CD4-positive, alpha-beta memory T cell (primary cell): ENCODE measurements at regions of chr4 and their contacts with region 1.

Region 1: DNA sequence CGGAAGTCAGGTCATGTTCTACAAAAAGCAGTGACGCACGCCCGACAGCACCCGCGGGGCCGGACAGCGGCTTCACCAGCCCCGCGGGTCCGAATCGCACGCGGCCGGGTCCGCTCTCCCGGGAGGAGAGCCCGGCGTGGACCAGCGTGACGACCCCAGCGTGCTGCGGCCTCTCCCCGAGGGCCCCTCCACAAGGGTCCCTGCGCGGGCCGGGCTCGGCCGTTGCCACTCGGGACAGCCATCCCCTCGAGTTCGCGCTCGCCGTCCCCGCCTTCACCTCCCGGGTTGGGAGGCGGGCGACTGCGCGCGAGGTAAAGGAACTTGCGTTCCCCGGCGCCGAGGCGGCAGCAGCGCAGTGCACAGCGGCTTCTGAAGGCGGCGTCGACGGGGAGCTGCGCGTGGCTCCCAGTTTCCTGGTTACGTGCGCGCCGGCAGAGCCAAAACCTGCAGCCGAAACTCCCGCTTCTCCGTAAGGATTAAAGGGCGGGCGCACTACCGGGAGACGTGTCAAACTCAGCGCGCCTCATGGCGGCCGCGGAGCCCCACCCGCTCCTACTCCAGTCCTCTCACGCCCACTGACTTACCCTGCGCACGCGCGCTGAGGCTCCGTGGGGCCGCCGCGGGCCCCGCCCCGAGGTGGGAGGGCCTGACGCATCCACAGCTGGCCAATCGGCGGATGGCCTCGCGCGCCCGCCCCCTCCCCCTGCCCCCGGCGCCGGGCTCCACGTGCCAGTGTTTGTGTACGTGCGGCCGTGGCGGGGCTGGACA is 416 bp upstream of the LRP2BP start:
- DNase-seq: peak; percentile 95 to 98 (median 97)
- H3K4me3 ChIP-seq: peak overlapping the region; percentile 91 to 99
- H3K4me3 Mint-ChIP-seq: peak overlapping the region; percentile 88 to 99 (median 95)
- H3K27ac ChIP-seq: peak overlapping the region; percentile 99
- H3K27ac Mint-ChIP-seq: peak overlapping the region; percentile 92 to 100 (median 99)
- H3K4me1 ChIP-seq: peaks cover 18% of the 10 kb centered on the region
- H3K4me1 Mint-ChIP-seq: peaks cover 11 to 24% (median 18%) of the 10 kb centered on the region in 4 donors
- H3K27me3 ChIP-seq: no peaks in the 10 kb centered on the region
- H3K27me3 Mint-ChIP-seq: no peaks in the 10 kb centered on the region

Region 2: GRCh38 chr4:183659029-183659871 is 1736.9 kb before region 1 on chr4 and contains the starts of genes RWDD4 and TRAPPC11:
- CTCF ChIA-PET with region 1: no interaction called
- POLR2A ChIA-PET with region 1: no interaction called
- intact Hi-C with region 1: loop called (anchors 5 kb)
- DNase-seq: peak; percentile 95 to 98 (median 96)
- H3K4me3 ChIP-seq: peak within 1 kb of the TSS; percentile 89 to 91
- H3K4me3 Mint-ChIP-seq: peak within 1 kb of the TSS; percentile 91 to 98 (median 94)
- H3K27ac ChIP-seq: peak within 1 kb of the TSS; percentile 93
- H3K27ac Mint-ChIP-seq: peak within 1 kb of the TSS; percentile 75 to 99 (median 97)
- H3K4me1 ChIP-seq: peaks cover 37% of the 10 kb centered on the region
- H3K4me1 Mint-ChIP-seq: peaks cover 25 to 54% (median 41%) of the 10 kb centered on the region in 4 donors
- H3K27me3 ChIP-seq: no peaks in the 10 kb centered on the region
- H3K27me3 Mint-ChIP-seq: no peaks in the 10 kb centered on the region
- total RNA-seq, gene RWDD4: 12.0 to 13.8 TPM
- total RNA-seq, gene TRAPPC11: 42.2 to 51.0 TPM

Region 3: DNA sequence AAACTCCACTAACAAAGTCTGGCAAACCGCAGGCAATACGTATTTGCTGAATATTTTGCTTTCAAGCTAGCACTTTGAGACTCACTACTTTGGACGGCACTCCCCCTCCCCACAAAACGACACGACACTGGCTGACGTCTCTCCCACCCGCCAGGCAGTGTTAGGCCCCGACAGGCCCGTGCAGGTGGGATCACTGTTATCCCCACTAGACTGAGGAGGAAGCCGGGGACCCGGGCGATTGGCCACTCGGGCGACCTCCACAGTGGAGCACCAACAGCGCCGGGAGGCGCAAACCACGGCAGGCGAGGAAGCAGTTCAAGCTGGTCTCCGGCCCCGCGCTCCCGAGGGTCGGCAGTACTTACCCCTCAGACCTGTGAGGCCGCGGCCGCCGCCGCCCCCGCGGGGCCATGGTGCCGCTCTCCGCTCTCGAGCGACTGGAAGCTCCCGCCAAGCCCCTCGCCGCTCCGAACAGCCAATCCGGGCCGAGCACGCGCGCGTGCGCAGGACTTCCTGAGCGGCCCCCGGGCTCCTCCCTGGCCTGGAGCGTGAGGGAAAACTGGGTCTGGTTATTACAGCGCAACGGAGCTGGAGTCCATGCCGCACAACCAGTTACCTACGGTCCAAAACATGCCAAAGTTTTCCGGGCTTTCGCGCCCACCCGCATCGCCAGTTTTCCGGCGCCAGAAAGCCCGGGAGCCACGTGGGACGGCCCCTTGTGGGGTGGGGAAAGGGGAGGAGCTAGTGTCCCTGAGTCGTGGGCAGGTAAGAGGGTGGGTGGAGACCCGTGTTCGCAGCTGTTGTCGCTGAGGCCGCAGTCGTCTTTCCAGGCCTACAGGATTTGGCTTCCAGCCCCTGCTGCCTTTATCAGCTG is 662.3 kb before region 1 on chr4 and contains the start of gene CENPU:
- CTCF ChIA-PET with region 1: no interaction called
- POLR2A ChIA-PET with region 1: interaction called, 4 read pairs
- intact Hi-C with region 1: loop called (anchors 5 kb)
- DNase-seq: peak; percentile 93 to 95 (median 94)
- H3K4me3 ChIP-seq: peak within 1 kb of the TSS; percentile 59 to 81
- H3K4me3 Mint-ChIP-seq: peak within 1 kb of the TSS; percentile 88 to 96 (median 92)
- H3K27ac ChIP-seq: peak within 1 kb of the TSS; percentile 56
- H3K27ac Mint-ChIP-seq: peak within 1 kb of the TSS; percentile 86 to 95 (median 92)
- H3K4me1 ChIP-seq: peaks cover 15% of the 10 kb centered on the region
- H3K4me1 Mint-ChIP-seq: peaks cover 8 to 23% (median 14%) of the 10 kb centered on the region in 4 donors
- H3K27me3 ChIP-seq: no peaks in the 10 kb centered on the region
- H3K27me3 Mint-ChIP-seq: no peaks in the 10 kb centered on the region
- total RNA-seq, gene CENPU: 2.1 to 2.2 TPM

Region 4: GRCh38 chr4:185142912-185143595 is 253.1 kb before region 1 on chr4 and contains the start of gene SLC25A4:
- CTCF ChIA-PET with region 1: no interaction called
- POLR2A ChIA-PET with region 1: interaction called, 14 read pairs
- intact Hi-C with region 1: loop called (anchors 5 kb)
- DNase-seq: peak; percentile 77 to 83 (median 81)
- H3K4me3 ChIP-seq: peak within 1 kb of the TSS; percentile 40 to 57
- H3K4me3 Mint-ChIP-seq: peak within 1 kb of the TSS; percentile 87 to 98 (median 90)
- H3K27ac ChIP-seq: peak within 1 kb of the TSS; percentile 26
- H3K27ac Mint-ChIP-seq: peak within 1 kb of the TSS in 6 of 7 donors; percentile 69 to 89 (median 83)
- H3K4me1 ChIP-seq: peaks cover 15% of the 10 kb centered on the region
- H3K4me1 Mint-ChIP-seq: peaks cover 8 to 24% (median 16%) of the 10 kb centered on the region in 4 donors
- H3K27me3 ChIP-seq: peaks cover 6% of the 10 kb centered on the region
- H3K27me3 Mint-ChIP-seq: peaks cover 8 to 13% of the 10 kb centered on the region in 2 donors
- total RNA-seq, gene SLC25A4: 6.4 to 7.2 TPM

Region 5: GRCh38 chr4:185209031-185209851 is 186.9 kb before region 1 on chr4 and contains the start of gene SNX25:
- CTCF ChIA-PET with region 1: no interaction called
- POLR2A ChIA-PET with region 1: interaction called, 30 read pairs
- intact Hi-C with region 1: loop called (anchors 1 kb)
- DNase-seq: peak; percentile 84 to 88 (median 86)
- H3K4me3 ChIP-seq: peak within 1 kb of the TSS; percentile 57 to 59
- H3K4me3 Mint-ChIP-seq: peak within 1 kb of the TSS; percentile 92 to 96 (median 93)
- H3K27ac ChIP-seq: peak within 1 kb of the TSS; percentile 46
- H3K27ac Mint-ChIP-seq: peak within 1 kb of the TSS; percentile 92 to 98 (median 93)
- H3K4me1 ChIP-seq: peaks cover 44% of the 10 kb centered on the region
- H3K4me1 Mint-ChIP-seq: peaks cover 33 to 62% (median 49%) of the 10 kb centered on the region in 4 donors
- H3K27me3 ChIP-seq: no peaks in the 10 kb centered on the region
- H3K27me3 Mint-ChIP-seq: no peaks in the 10 kb centered on the region
- total RNA-seq, gene SNX25: 23.0 to 24.5 TPM

Region 6: DNA sequence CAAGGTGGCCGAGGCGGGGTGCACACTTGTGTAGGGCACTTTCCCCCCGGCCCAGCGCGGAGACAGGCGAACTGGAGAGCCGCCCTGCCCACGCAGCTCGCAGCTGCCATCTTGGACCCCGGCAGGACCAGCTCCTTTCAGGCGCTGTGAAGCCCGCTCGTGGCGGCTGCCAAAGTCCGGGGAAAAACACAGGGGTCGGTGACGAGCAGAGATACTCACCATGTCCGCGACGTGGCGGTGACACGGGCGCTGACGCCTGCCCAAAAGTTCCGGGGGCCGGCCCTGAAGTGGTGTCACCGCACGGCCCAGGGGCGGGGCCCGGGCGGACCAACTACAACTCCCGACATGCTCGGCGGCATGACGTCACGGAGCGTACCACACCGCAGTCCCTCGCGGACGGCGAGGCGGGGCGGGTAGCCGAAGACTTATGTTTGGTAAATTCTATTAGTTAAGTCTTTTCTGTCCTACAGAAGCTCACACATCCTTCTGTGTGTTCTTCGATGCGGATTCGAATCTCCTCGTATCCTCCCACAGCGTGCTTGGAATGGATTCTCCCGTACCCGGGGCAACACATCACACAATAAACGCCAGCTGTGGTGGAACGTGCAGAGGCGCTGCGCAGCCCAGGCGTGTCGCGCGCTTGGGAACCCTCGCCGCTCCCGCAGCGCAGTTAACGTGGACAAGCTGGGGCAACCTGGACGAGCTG is 29.7 kb after region 1 on chr4 and contains the start of gene UFSP2:
- CTCF ChIA-PET with region 1: interaction called, 10 read pairs
- POLR2A ChIA-PET with region 1: interaction called, 94 read pairs
- intact Hi-C with region 1: loop called (anchors 1 kb)
- DNase-seq: peak; percentile 91 to 96 (median 92)
- H3K4me3 ChIP-seq: peak within 1 kb of the TSS; percentile 45 to 77
- H3K4me3 Mint-ChIP-seq: peak within 1 kb of the TSS; percentile 89 to 98 (median 96)
- H3K27ac ChIP-seq: peak within 1 kb of the TSS; percentile 99
- H3K27ac Mint-ChIP-seq: peak within 1 kb of the TSS; percentile 92 to 100 (median 100)
- H3K4me1 ChIP-seq: peaks cover 24% of the 10 kb centered on the region
- H3K4me1 Mint-ChIP-seq: peaks cover 23 to 46% (median 29%) of the 10 kb centered on the region in 4 donors
- H3K27me3 ChIP-seq: no peaks in the 10 kb centered on the region
- H3K27me3 Mint-ChIP-seq: peaks cover 1 to 2% of the 10 kb centered on the region in 2 donors
- total RNA-seq, gene UFSP2: 30.1 to 30.3 TPM

Region 7: GRCh38 chr4:186191200-186192065 is 795.3 kb after region 1 on chr4 and contains the start of gene CYP4V2:
- CTCF ChIA-PET with region 1: no interaction called
- POLR2A ChIA-PET with region 1: interaction called, 8 read pairs
- intact Hi-C with region 1: loop called (anchors 10 kb)
- DNase-seq: peak; percentile 85 to 93 (median 90)
- H3K4me3 ChIP-seq: peak within 1 kb of the TSS; percentile 79
- H3K4me3 Mint-ChIP-seq: peak within 1 kb of the TSS; percentile 92 to 97 (median 95)
- H3K27ac ChIP-seq: peak within 1 kb of the TSS; percentile 90
- H3K27ac Mint-ChIP-seq: peak within 1 kb of the TSS; percentile 96 to 98 (median 97)
- H3K4me1 ChIP-seq: peaks cover 36% of the 10 kb centered on the region
- H3K4me1 Mint-ChIP-seq: peaks cover 30 to 57% (median 42%) of the 10 kb centered on the region in 4 donors
- H3K27me3 ChIP-seq: no peaks in the 10 kb centered on the region
- H3K27me3 Mint-ChIP-seq: no peaks in the 10 kb centered on the region
- total RNA-seq, gene CYP4V2: 41.9 to 45.5 TPM